CD4-positive, alpha-beta memory T cell (primary cell): ENCODE measurements at regions of chr10 and their contacts with region 1.

Region 1: DNA sequence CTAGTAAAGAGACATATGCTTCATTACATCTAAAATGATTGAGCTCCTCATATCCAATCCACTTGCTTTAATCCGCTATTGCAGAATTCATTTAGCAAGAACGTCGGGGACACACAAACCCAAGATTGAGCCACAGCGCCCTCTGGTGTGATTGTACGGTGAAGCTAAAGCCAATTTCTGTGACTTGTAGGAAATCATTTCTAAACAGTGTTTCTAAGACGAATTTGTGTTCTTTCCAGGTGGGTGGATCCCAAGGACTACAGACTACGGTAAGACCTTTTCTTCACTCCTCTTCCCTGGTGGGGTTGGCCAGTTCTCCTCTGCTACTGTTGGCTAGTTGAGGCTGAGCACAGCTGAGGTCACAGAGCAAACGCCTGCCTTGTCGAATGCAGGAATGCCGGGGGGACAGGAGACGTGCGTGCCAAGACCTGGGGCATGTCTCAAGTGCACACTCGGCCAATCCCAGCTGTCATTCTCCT is 5.2 kb downstream of the DMBT1 start:
- DNase-seq: peak; percentile 60 to 70 (median 63)
- H3K4me3 ChIP-seq: no peak overlapping the region
- H3K4me3 Mint-ChIP-seq: peak overlapping the region in 1 of 8 donors; percentile 6
- H3K27ac ChIP-seq: no peak overlapping the region
- H3K27ac Mint-ChIP-seq: no peak overlapping the region
- H3K4me1 ChIP-seq: peaks cover 9% of the 10 kb centered on the region
- H3K4me1 Mint-ChIP-seq: peaks cover 14 to 21% (median 19%) of the 10 kb centered on the region in 4 donors
- H3K27me3 ChIP-seq: no peaks in the 10 kb centered on the region
- H3K27me3 Mint-ChIP-seq: peaks cover 12% of the 10 kb centered on the region in 2 donors

Region 2: GRCh38 chr10:122298598-122299301 is 267.0 kb before region 1 on chr10:
- CTCF ChIA-PET with region 1: interaction called, 63 read pairs
- POLR2A ChIA-PET with region 1: interaction called, 3 read pairs
- intact Hi-C with region 1: loop called (anchors 1 kb)
- DNase-seq: peak; percentile 55 to 63 (median 56)
- H3K4me3 ChIP-seq: peak overlapping the region in 1 of 2 donors; percentile 6
- H3K4me3 Mint-ChIP-seq: peak overlapping the region in 6 of 8 donors; percentile 53 to 74 (median 60)
- H3K27ac ChIP-seq: no peak overlapping the region
- H3K27ac Mint-ChIP-seq: peak overlapping the region in 4 of 7 donors; percentile 1 to 54 (median 47)
- H3K4me1 ChIP-seq: peaks cover 17% of the 10 kb centered on the region
- H3K4me1 Mint-ChIP-seq: peaks cover 12 to 27% (median 16%) of the 10 kb centered on the region in 4 donors
- H3K27me3 ChIP-seq: no peaks in the 10 kb centered on the region
- H3K27me3 Mint-ChIP-seq: peaks cover 0 to 5% of the 10 kb centered on the region in 2 donors

Region 3: DNA sequence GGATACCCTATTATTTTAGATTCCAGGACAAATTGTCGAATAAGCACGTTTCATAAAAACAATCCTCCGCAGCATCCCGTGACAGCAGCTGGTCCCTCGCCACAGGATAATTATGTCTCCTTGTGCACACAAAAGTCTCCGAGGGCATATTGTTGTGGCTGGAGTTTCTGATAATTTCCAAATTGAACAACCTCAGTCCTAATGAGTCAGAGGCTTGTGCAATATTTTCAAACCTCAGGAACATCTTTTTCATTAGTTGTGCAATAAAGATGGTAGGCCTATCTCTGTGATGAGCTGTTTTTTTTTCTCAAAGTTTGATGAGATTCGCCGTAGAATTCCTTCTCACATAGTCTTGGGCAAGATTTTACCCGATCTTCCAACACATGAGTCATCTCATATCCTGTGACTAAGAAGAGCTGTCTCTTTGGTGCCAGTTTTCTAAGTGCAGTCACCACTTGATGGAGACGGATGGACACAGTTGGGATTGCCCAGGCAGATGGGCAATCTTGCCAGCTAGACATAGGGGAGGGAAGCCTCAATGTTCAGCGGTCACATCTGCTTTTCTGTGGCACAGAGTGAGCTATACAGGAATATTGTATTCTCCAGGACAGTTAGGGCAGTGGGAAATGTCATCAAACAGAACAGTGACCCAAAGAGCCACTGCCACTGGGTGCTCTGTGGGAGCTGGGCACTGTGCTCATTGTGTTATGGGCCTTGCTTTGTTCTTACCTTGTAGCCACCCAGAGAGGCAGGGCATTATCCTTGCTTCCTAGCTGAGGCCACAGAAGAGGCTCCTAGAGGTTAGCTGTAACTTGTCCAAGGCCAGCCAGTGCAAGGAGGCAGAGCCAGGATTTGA is 96.6 kb before region 1 on chr10:
- CTCF ChIA-PET with region 1: interaction called, 11 read pairs
- POLR2A ChIA-PET with region 1: no interaction called
- intact Hi-C with region 1: no loop called
- DNase-seq: no peak
- H3K4me3 ChIP-seq: no peak overlapping the region
- H3K4me3 Mint-ChIP-seq: no peak overlapping the region
- H3K27ac ChIP-seq: no peak overlapping the region
- H3K27ac Mint-ChIP-seq: no peak overlapping the region
- H3K4me1 ChIP-seq: no peaks in the 10 kb centered on the region
- H3K4me1 Mint-ChIP-seq: peaks cover 0 to 5% (median under 1%) of the 10 kb centered on the region in 4 donors
- H3K27me3 ChIP-seq: no peaks in the 10 kb centered on the region
- H3K27me3 Mint-ChIP-seq: peaks cover 2 to 9% of the 10 kb centered on the region in 2 donors

Region 4: GRCh38 chr10:122515588-122516231 is 50.1 kb before region 1 on chr10:
- CTCF ChIA-PET with region 1: interaction called, 90 read pairs
- POLR2A ChIA-PET with region 1: interaction called, 3 read pairs
- intact Hi-C with region 1: loop called (anchors 1 kb)
- DNase-seq: peak; percentile 73 to 80 (median 79)
- H3K4me3 ChIP-seq: no peak overlapping the region
- H3K4me3 Mint-ChIP-seq: peak overlapping the region in 7 of 8 donors; percentile 52 to 83 (median 70)
- H3K27ac ChIP-seq: no peak overlapping the region
- H3K27ac Mint-ChIP-seq: peak overlapping the region; percentile 19 to 87 (median 54)
- H3K4me1 ChIP-seq: peaks cover 44% of the 10 kb centered on the region
- H3K4me1 Mint-ChIP-seq: peaks cover 31 to 58% (median 45%) of the 10 kb centered on the region in 4 donors
- H3K27me3 ChIP-seq: no peaks in the 10 kb centered on the region
- H3K27me3 Mint-ChIP-seq: no peaks in the 10 kb centered on the region

Region 5: GRCh38 chr10:122551450-122551849 is 14.3 kb before region 1 on chr10:
- CTCF ChIA-PET with region 1: interaction called, 32 read pairs
- POLR2A ChIA-PET with region 1: no interaction called
- intact Hi-C with region 1: no loop called
- DNase-seq: peak; percentile 38 to 49 (median 41)
- H3K4me3 ChIP-seq: no peak overlapping the region
- H3K4me3 Mint-ChIP-seq: peak overlapping the region in 7 of 8 donors; percentile 24 to 78 (median 61)
- H3K27ac ChIP-seq: no peak overlapping the region
- H3K27ac Mint-ChIP-seq: peak overlapping the region; percentile 69 to 90 (median 87)
- H3K4me1 ChIP-seq: peaks cover 24% of the 10 kb centered on the region
- H3K4me1 Mint-ChIP-seq: peaks cover 21 to 42% (median 27%) of the 10 kb centered on the region in 4 donors
- H3K27me3 ChIP-seq: no peaks in the 10 kb centered on the region
- H3K27me3 Mint-ChIP-seq: no peaks in the 10 kb centered on the region

Region 6: DNA sequence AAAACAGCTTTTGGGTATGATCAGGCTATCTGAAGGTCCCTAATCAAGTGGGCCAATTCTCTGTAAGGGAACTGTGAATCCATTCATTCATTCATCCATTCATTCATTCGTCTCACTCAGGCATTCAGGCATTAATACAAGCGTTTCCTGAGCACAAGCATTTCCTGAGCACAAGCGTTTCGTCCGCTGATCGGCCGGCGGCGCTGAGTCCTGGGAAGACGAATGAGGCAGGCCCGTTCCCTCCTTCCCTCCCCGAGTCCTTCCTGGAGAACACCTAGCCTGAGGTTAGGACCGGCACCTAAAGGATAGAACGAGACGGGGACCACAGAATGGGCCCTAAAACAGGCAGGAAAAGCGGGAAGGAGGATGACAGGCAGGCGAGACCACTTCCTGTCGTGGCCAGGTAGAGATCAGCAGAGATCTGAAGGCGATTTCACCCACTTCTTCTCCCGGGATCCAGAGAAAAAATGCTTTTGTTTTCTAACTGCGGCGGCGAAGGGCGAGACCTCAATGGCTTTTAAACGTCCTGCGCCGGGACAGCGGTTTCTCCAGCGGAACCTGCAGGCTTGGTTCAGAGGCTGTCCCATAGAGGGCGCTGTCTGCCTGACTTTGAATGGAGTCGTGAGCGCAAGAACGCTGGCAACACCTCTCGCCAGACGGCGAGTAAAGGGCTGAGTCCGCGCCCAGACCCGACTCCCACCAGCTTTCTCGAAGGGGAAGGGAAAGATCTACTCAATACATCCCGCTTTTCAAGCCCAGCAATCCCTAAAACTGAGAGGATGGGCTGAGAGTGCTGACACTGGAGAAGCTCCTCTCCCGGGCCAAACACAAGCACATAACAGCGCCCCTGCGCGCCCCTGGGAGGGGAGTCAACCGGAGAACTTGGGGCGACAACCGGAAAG is 567.1 kb after region 1 on chr10:
- CTCF ChIA-PET with region 1: no interaction called
- POLR2A ChIA-PET with region 1: no interaction called
- intact Hi-C with region 1: loop called (anchors 10 kb)
- DNase-seq: peak; percentile 78 to 82 (median 79)
- H3K4me3 ChIP-seq: no peak overlapping the region
- H3K4me3 Mint-ChIP-seq: peak overlapping the region; percentile 36 to 92 (median 79)
- H3K27ac ChIP-seq: no peak overlapping the region
- H3K27ac Mint-ChIP-seq: peak overlapping the region in 6 of 7 donors; percentile 26 to 92 (median 72)
- H3K4me1 ChIP-seq: peaks cover 46% of the 10 kb centered on the region
- H3K4me1 Mint-ChIP-seq: peaks cover 14 to 43% (median 29%) of the 10 kb centered on the region in 4 donors
- H3K27me3 ChIP-seq: peaks cover 35% of the 10 kb centered on the region
- H3K27me3 Mint-ChIP-seq: peaks cover 51 to 60% of the 10 kb centered on the region in 2 donors